AG04449 (cell line): ENCODE measurements at regions of chrX and their contacts with region 1.

Region 1: GRCh38 chrX:97685753-97686152 is 802.0 kb downstream of the RPA4 start:
- DNase-seq: no peak
- H3K4me3 ChIP-seq: no peak overlapping the region
- CTCF ChIP-seq: peak; percentile 48

Region 2: GRCh38 chrX:96770315-96770714 is 915.4 kb before region 1 on chrX:
- CTCF ChIA-PET with region 1: interaction called, 16 read pairs
- POLR2A ChIA-PET with region 1: no interaction called
- DNase-seq: no peak
- H3K4me3 ChIP-seq: no peak overlapping the region
- CTCF ChIP-seq: no peak

Region 3: DNA sequence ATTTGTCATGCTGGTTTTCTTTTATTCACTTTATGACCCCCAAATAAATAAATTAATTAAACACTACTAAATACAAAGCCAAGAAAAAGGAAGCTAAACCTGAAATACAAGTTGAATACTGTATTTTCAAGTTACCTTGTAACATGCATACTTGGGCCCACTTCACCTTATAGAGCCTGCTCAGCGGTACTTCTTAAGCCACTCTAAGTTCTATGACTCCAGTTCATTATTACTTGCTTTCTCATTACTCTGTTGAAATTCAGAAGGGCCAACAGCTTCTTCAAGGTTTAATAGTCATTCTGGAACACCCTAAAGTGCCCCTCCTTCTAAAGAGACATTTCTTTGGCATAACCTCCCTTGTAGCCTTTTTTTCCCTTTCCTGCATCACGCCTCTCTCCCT is 42.5 kb after region 1 on chrX:
- CTCF ChIA-PET with region 1: no interaction called
- POLR2A ChIA-PET with region 1: no interaction called
- DNase-seq: no peak
- H3K4me3 ChIP-seq: no peak overlapping the region
- CTCF ChIP-seq: no peak

Region 4: DNA sequence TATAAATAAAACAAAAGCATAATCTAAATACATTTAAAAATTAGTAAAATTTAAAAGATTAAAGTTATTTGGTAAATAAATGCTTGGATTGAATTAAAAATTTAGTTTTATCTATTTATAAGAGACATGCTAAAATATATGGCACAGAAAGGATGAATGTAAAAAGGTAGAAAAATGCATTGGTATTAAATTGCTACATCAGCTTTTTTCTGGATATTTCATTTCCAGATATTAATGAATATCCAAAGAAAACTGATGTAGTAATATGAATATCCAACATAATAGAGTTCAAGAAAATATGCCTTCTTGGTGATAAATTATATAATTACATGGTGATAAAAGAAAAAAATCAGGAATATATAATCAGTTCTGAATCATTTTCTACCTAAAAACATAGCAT is 941.9 kb after region 1 on chrX:
- CTCF ChIA-PET with region 1: no interaction called
- POLR2A ChIA-PET with region 1: no interaction called
- DNase-seq: no peak
- H3K4me3 ChIP-seq: no peak overlapping the region
- CTCF ChIP-seq: no peak